ENCODE measurements at regions of chr11 and their contacts with region 1.

Region 1: DNA sequence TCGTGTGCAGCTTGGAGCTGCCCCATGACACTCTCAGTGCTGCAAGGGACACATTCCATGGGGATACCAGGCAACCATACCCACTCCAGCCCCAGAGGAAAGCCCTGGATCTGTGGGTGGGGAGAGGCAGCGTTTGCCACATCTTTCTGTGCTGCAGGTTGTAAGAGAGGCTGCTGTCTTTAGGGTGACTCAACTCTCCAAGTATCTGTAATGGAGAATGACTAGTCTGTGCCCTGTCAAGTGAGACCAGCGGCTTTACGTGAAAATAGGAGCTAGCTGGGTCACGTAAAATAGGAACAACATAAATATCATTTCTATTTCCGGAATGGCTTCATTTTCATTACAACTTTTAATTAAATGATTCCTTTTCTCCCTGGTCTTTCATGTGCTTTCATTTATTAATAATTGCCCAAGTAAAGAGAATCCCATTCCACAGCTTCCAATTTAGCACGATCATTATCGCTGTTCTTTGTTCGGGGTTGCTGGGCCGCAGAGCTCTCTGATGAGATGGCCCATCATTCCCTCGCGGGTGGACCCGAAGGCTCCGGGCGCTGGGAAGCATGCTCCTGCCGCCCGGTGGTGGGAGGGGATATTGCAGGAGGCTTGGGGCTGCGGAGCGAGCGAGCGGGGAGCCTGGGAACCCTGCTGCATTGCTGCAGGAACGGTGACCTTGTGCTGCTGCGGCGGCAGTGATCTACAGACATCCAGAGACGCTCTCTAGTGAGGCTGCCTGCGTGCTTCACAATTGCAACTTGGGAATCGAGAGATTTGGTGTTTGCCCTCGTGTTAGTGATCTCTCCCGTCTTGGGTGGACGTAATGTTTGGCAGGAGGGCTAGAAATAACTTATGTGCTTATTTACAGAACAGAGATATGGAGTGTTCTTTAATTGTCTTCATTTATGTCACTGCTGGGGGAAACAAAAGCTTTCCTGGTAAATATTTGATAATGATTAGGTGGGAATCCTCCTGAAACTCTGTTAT is 10.6 kb downstream of the SLC6A5 start:
- DNase-seq: no peak
- H3K4me3 ChIP-seq: peak overlapping the region in 1 of 4 donors; percentile 32
- H3K27ac ChIP-seq: no peak overlapping the region
- H3K4me1 ChIP-seq: peaks cover 0 to 15% (median 8%) of the 10 kb centered on the region in 3 donors
- H3K27me3 ChIP-seq: peaks cover 9 to 97% (median 11%) of the 10 kb centered on the region in 4 donors
- CTCF ChIP-seq: peak; percentile 23 to 94 (median 90)
- POLR2A ChIP-seq: no peak

Region 2: GRCh38 chr11:20293531-20293930 is 316.5 kb before region 1 on chr11:
- intact Hi-C with region 1: no loop called
- DNase-seq: no peak
- H3K4me3 ChIP-seq: no peak overlapping the region
- H3K27ac ChIP-seq: no peak overlapping the region
- H3K4me1 ChIP-seq: no peaks in the 10 kb centered on the region
- H3K27me3 ChIP-seq: peaks cover 0 to 10% (median 0%) of the 10 kb centered on the region in 4 donors
- CTCF ChIP-seq: no peak
- POLR2A ChIP-seq: no peak

Region 3: GRCh38 chr11:20397281-20397680 is 212.7 kb before region 1 on chr11:
- intact Hi-C with region 1: loop called (anchors 5 kb)
- DNase-seq: no peak
- H3K4me3 ChIP-seq: no peak overlapping the region
- H3K27ac ChIP-seq: no peak overlapping the region
- H3K4me1 ChIP-seq: no peaks in the 10 kb centered on the region
- H3K27me3 ChIP-seq: no peaks in the 10 kb centered on the region
- CTCF ChIP-seq: peak in 5 of 6 experiments; percentile 18 to 60 (median 31)
- POLR2A ChIP-seq: no peak

Region 4: GRCh38 chr11:20438637-20439036 is 171.4 kb before region 1 on chr11:
- intact Hi-C with region 1: no loop called
- DNase-seq: no peak
- H3K4me3 ChIP-seq: no peak overlapping the region
- H3K27ac ChIP-seq: no peak overlapping the region
- H3K4me1 ChIP-seq: no peaks in the 10 kb centered on the region
- H3K27me3 ChIP-seq: no peaks in the 10 kb centered on the region
- CTCF ChIP-seq: no peak
- POLR2A ChIP-seq: no peak

Region 5: DNA sequence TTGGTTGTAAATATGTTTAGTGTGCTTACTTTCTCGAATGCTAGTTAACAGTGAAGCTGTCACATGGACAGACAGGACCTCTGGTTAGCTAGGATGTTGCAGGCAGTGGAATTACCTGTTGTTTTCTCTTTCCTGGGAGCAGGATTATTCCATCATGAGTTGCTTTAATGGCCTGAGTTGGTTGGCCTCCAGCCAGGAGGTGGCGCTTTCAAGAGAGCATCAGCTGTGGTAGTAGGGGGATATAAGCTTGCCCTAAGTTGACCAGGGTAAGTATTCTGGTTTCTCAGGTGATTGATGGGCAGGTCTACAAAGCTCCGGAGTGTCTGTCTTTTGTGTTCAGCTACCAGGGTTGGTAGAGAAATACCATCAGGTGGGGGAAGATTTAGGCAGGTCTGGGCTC is 102.9 kb after region 1 on chr11:
- intact Hi-C with region 1: no loop called
- DNase-seq: no peak
- H3K4me3 ChIP-seq: no peak overlapping the region
- H3K27ac ChIP-seq: no peak overlapping the region
- H3K4me1 ChIP-seq: no peaks in the 10 kb centered on the region
- H3K27me3 ChIP-seq: no peaks in the 10 kb centered on the region
- CTCF ChIP-seq: no peak
- POLR2A ChIP-seq: no peak

Region 6: DNA sequence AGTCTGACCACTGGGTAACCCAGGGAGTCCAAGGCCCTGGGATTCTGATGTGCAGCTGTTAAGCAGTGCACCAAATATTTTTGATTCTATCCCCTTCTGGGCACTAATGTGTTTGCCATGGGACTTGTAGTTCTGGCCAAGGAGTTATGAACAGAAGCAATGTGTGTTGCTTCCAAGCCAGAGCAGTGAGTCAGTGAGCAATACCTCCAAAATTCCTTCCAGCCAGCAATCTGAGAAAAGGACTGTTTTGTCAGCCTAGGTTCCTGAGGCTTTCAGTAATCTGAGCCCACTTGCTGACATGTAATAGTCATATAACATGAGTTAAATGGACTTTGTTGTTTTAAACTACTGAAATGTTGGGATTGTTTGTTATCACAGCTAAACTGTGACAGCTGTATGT is 370.7 kb after region 1 on chr11:
- intact Hi-C with region 1: no loop called
- DNase-seq: no peak
- H3K4me3 ChIP-seq: no peak overlapping the region
- H3K27ac ChIP-seq: no peak overlapping the region
- H3K4me1 ChIP-seq: no peaks in the 10 kb centered on the region
- H3K27me3 ChIP-seq: no peaks in the 10 kb centered on the region
- CTCF ChIP-seq: no peak
- POLR2A ChIP-seq: no peak